ENCODE measurements at regions of chr5 and their contacts with region 1.

Region 1: DNA sequence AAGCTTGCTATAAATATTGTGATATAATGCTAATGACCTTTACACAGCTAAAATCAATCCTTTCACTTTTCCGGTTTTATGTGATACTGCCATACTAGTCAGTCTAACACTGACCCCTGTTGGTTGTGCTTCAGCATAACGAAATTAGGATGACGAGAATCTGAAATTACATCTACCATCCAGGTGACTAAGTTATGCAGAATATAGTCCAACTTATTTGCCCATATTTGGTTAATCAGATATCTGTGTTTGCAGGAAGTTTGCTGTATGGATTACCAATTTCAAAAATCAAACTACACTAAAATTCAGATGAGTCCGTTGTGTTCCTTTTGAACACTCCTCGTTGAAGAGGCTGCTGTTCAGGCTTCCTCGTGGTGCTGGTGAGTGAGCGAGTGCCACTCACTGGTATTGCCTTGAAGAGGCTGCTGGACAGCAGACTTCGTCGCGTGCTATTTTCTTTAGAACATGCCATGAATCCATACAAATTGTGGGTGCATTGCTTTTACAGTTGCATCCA is 32.5 kb downstream of the TENT4A start:
- DNase-seq: peak in 4 of 5 donors; percentile 54 to 60 (median 59)
- H3K4me3 ChIP-seq: no peak overlapping the region
- H3K4me3 Mint-ChIP-seq: no peak overlapping the region
- H3K27ac ChIP-seq: no peak overlapping the region
- H3K27ac Mint-ChIP-seq: peak overlapping the region in 2 of 7 donors; percentile 48 to 62
- H3K4me1 ChIP-seq: no peaks in the 10 kb centered on the region
- H3K4me1 Mint-ChIP-seq: peaks cover 3 to 15% (median 5%) of the 10 kb centered on the region in 4 donors
- H3K27me3 ChIP-seq: no peaks in the 10 kb centered on the region
- H3K27me3 Mint-ChIP-seq: no peaks in the 10 kb centered on the region

Region 2: GRCh38 chr5:5492087-5492933 is 1253.5 kb before region 1 on chr5:
- CTCF ChIA-PET with region 1: interaction called, 3 read pairs
- POLR2A ChIA-PET with region 1: no interaction called
- intact Hi-C with region 1: loop called (anchors 1 kb)
- DNase-seq: peak; percentile 56 to 67 (median 60)
- H3K4me3 ChIP-seq: no peak overlapping the region
- H3K4me3 Mint-ChIP-seq: peak overlapping the region in 7 of 8 donors; percentile 71 to 79 (median 75)
- H3K27ac ChIP-seq: no peak overlapping the region
- H3K27ac Mint-ChIP-seq: peak overlapping the region in 4 of 7 donors; percentile 61 to 93 (median 80)
- H3K4me1 ChIP-seq: peaks cover 19% of the 10 kb centered on the region
- H3K4me1 Mint-ChIP-seq: peaks cover 14 to 34% (median 25%) of the 10 kb centered on the region in 4 donors
- H3K27me3 ChIP-seq: no peaks in the 10 kb centered on the region
- H3K27me3 Mint-ChIP-seq: peaks cover 0 to 6% of the 10 kb centered on the region in 2 donors

Region 3: GRCh38 chr5:6615034-6615815 is 130.5 kb before region 1 on chr5:
- CTCF ChIA-PET with region 1: interaction called, 6 read pairs
- POLR2A ChIA-PET with region 1: no interaction called
- intact Hi-C with region 1: loop called (anchors 5 kb)
- DNase-seq: no peak
- H3K4me3 ChIP-seq: no peak overlapping the region
- H3K4me3 Mint-ChIP-seq: no peak overlapping the region
- H3K27ac ChIP-seq: no peak overlapping the region
- H3K27ac Mint-ChIP-seq: peak overlapping the region in 2 of 7 donors; percentile 37 to 72
- H3K4me1 ChIP-seq: no peaks in the 10 kb centered on the region
- H3K4me1 Mint-ChIP-seq: peaks cover 10 to 29% (median 19%) of the 10 kb centered on the region in 4 donors
- H3K27me3 ChIP-seq: no peaks in the 10 kb centered on the region
- H3K27me3 Mint-ChIP-seq: no peaks in the 10 kb centered on the region

Region 4: GRCh38 chr5:6632917-6633468 is 112.8 kb before region 1 on chr5 and contains the starts of genes NSUN2 and SRD5A1:
- CTCF ChIA-PET with region 1: interaction called, 35 read pairs
- POLR2A ChIA-PET with region 1: interaction called, 10 read pairs
- intact Hi-C with region 1: loop called (anchors 1 kb)
- DNase-seq: peak; percentile 92 to 98 (median 95)
- H3K4me3 ChIP-seq: peak within 1 kb of the TSS; percentile 66 to 94
- H3K4me3 Mint-ChIP-seq: peak within 1 kb of the TSS; percentile 84 to 99 (median 93)
- H3K27ac ChIP-seq: peak within 1 kb of the TSS; percentile 87
- H3K27ac Mint-ChIP-seq: peak within 1 kb of the TSS; percentile 92 to 99 (median 99)
- H3K4me1 ChIP-seq: peaks cover 36% of the 10 kb centered on the region
- H3K4me1 Mint-ChIP-seq: peaks cover 30 to 60% (median 39%) of the 10 kb centered on the region in 4 donors
- H3K27me3 ChIP-seq: no peaks in the 10 kb centered on the region
- H3K27me3 Mint-ChIP-seq: no peaks in the 10 kb centered on the region
- total RNA-seq, gene NSUN2: 78.0 to 81.6 TPM
- total RNA-seq, gene SRD5A1: 7.8 to 9.2 TPM

Region 5: GRCh38 chr5:6718161-6718681 is 27.5 kb before region 1 on chr5:
- CTCF ChIA-PET with region 1: interaction called, 15 read pairs
- POLR2A ChIA-PET with region 1: interaction called, 11 read pairs
- intact Hi-C with region 1: loop called (anchors 1 kb)
- DNase-seq: no peak
- H3K4me3 ChIP-seq: no peak overlapping the region
- H3K4me3 Mint-ChIP-seq: peak overlapping the region; percentile 17 to 72 (median 34)
- H3K27ac ChIP-seq: no peak overlapping the region
- H3K27ac Mint-ChIP-seq: peak overlapping the region in 5 of 7 donors; percentile 48 to 91 (median 72)
- H3K4me1 ChIP-seq: peaks cover 78% of the 10 kb centered on the region
- H3K4me1 Mint-ChIP-seq: peaks cover 59 to 85% (median 72%) of the 10 kb centered on the region in 4 donors
- H3K27me3 ChIP-seq: no peaks in the 10 kb centered on the region
- H3K27me3 Mint-ChIP-seq: no peaks in the 10 kb centered on the region

Region 6: GRCh38 chr5:7540771-7541485 is 795.2 kb after region 1 on chr5:
- CTCF ChIA-PET with region 1: no interaction called
- POLR2A ChIA-PET with region 1: no interaction called
- intact Hi-C with region 1: no loop called
- DNase-seq: no peak
- H3K4me3 ChIP-seq: no peak overlapping the region
- H3K4me3 Mint-ChIP-seq: no peak overlapping the region
- H3K27ac ChIP-seq: no peak overlapping the region
- H3K27ac Mint-ChIP-seq: no peak overlapping the region
- H3K4me1 ChIP-seq: no peaks in the 10 kb centered on the region
- H3K4me1 Mint-ChIP-seq: no peaks in the 10 kb centered on the region
- H3K27me3 ChIP-seq: no peaks in the 10 kb centered on the region
- H3K27me3 Mint-ChIP-seq: peaks cover 0 to 3% of the 10 kb centered on the region in 2 donors